ENCODE measurements at regions of chr9 and their contacts with region 1.

Region 1: DNA sequence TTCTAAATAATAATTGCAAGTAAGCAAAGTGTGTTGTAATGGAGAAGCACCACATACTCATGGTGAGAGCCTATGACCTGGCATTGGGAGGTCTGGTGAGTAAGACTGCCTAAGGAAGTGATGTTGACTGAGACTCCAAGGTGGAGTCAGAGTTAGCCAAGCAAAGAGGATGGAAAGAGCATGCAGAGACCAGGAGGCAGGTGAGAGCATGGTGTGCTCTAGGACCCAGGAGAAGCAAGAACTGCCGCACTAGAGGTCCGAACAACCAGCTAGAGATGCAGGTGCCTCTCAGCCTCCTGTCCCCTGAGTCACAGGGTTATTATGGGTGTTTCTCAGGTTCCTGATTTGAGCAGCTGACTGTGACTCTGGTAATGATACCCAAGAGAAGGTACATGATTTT is 27.3 kb downstream of the ANP32B start:
- DNase-seq: peak; percentile 78
- H3K4me3 ChIP-seq: no peak overlapping the region
- H3K27ac ChIP-seq: no peak overlapping the region
- H3K4me1 ChIP-seq: peaks cover 9% of the 10 kb centered on the region
- H3K27me3 ChIP-seq: no peaks in the 10 kb centered on the region
- CTCF ChIP-seq: no peak

Region 2: DNA sequence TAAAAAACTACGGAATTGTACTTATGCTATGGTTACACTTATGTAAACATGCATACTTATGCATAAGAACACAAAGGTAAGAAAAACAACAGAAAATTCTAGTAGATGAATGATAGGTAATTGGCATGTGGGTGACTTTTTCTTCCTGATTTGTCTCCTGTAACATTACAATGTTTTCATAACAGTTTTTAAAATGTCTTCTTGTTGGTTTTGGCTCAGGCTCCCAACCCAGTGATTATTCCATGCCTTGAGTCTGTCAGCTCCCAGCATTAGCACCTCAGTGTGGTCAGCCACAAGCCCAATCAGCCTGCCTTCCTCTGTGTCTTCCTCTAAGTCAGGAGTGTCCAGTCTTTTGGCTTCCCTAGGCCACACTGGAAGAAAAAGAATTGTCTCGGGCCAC is 165.3 kb before region 1 on chr9:
- CTCF ChIA-PET with region 1: no interaction called
- dilution Hi-C with region 1: no loop called
- in situ Hi-C with region 1: no loop called
- intact Hi-C with region 1: no loop called
- DNase-seq: peak; percentile 50
- H3K4me3 ChIP-seq: no peak overlapping the region
- H3K27ac ChIP-seq: no peak overlapping the region
- H3K4me1 ChIP-seq: peaks cover 12% of the 10 kb centered on the region
- H3K27me3 ChIP-seq: peaks cover 30% of the 10 kb centered on the region
- CTCF ChIP-seq: no peak

Region 3: GRCh38 chr9:97923529-97924108 is 86.8 kb before region 1 on chr9:
- CTCF ChIA-PET with region 1: no interaction called
- dilution Hi-C with region 1: no loop called
- in situ Hi-C with region 1: no loop called
- intact Hi-C with region 1: no loop called
- DNase-seq: peak; percentile 72
- H3K4me3 ChIP-seq: peak overlapping the region; percentile 17 to 67 (median 34)
- H3K27ac ChIP-seq: peak overlapping the region; percentile 11
- H3K4me1 ChIP-seq: peaks cover 9% of the 10 kb centered on the region
- H3K27me3 ChIP-seq: no peaks in the 10 kb centered on the region
- CTCF ChIP-seq: peak; percentile 30 to 69

Region 4: DNA sequence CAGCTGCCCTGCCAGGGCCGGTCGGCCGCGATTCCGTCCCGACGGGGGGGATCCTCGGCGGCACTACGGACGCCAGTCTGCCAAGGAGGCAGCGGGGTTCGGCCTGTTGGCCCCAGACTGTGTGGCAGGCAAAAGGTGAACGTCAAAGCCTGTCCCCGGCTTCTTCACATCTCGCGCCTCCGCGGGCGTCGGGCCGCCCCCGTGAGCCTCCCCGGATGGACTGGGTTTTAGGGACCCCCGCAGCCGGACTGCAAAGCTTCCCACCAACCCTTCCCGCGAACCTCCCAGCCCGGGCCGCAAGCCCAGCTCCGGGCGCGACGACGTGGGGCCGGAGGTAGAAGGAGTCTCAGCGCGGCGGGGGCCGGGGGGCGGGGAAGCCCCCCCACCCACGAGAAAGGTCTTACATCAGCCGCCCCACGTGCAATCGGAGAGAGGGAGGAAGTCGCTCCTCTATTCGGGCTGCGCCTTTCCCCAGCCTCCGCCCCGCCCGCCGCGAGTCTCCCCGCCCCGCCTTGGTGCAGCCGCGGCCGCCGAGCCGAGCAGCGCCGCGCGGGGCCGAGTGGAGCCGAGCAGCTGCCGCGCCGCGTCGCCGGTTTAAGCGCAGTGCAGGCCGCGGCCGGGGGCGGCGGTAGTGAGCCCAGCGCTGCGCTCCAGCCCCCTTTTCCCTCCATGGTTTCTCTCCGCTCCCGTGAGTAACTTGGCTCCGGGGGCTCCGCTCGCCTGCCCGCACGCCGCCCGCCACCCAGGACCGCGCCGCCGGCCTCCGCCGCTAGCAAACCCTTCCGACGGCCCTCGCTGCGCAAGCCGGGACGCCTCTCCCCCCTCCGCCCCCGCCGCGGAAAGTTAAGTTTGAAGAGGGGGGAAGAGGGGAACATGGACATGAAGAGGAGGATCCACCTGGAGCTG is 27.5 kb before region 1 on chr9 and contains the start of gene ANP32B:
- CTCF ChIA-PET with region 1: no interaction called
- dilution Hi-C with region 1: no loop called
- in situ Hi-C with region 1: no loop called
- intact Hi-C with region 1: loop called (anchors 2 kb)
- DNase-seq: peak; percentile 86
- H3K4me3 ChIP-seq: peak within 1 kb of the TSS; percentile 82 to 90 (median 88)
- H3K27ac ChIP-seq: peak within 1 kb of the TSS; percentile 94
- H3K4me1 ChIP-seq: peaks cover 43% of the 10 kb centered on the region
- H3K27me3 ChIP-seq: no peaks in the 10 kb centered on the region
- CTCF ChIP-seq: peak; percentile 65 to 70
- total RNA-seq, gene ANP32B: 8.2 to 164 TPM

Region 5: GRCh38 chr9:98056269-98057137 is 46.1 kb after region 1 on chr9 and contains the start of gene NANS:
- CTCF ChIA-PET with region 1: no interaction called
- dilution Hi-C with region 1: no loop called
- in situ Hi-C with region 1: no loop called
- intact Hi-C with region 1: loop called (anchors 2 kb)
- DNase-seq: peak; percentile 96
- H3K4me3 ChIP-seq: peak within 1 kb of the TSS; percentile 56 to 95 (median 57)
- H3K27ac ChIP-seq: peak within 1 kb of the TSS; percentile 62
- H3K4me1 ChIP-seq: peaks cover 10% of the 10 kb centered on the region
- H3K27me3 ChIP-seq: no peaks in the 10 kb centered on the region
- CTCF ChIP-seq: no peak
- total RNA-seq, gene NANS: 44.7 to 52.4 TPM

Region 6: DNA sequence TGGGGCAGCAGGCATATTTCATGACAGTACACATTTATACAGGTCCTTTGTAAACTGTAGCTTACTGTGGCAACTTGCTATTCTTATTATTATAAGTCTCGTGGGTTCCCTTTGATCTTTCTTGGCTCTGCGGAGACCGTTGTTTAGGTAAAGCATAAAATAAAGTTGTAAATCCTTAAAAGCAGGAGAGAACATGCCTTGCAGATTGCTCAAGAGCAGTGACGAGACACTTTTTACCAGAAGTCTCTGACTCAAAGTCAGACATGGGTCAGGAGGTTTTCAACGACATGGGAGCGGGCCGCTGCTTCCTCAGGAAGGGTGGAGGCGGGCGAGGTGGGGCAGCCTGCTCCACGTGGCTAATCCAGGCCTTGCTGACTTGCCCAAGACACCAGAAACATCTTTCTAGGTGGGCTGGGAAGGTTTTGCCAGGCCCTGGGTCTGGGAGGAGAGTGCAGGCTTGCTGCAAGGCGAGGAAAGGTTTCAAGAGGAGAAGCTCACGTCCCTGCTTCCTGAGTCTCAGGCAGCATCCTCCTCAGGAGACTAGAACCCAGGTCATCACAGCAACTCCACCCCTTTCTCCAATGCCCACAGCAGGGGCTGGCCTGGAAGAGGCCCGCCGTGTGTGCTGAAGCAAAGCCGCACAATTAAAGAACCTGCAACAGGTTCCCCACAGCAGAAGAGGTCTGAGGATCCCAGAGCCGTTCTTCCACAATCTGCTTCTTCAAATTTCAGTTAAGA is 238.5 kb after region 1 on chr9:
- CTCF ChIA-PET with region 1: no interaction called
- dilution Hi-C with region 1: no loop called
- in situ Hi-C with region 1: loop called in 1 of 2 experiments (anchors 25 kb)
- intact Hi-C with region 1: no loop called
- DNase-seq: peak; percentile 97
- H3K4me3 ChIP-seq: no peak overlapping the region
- H3K27ac ChIP-seq: peak overlapping the region; percentile 78
- H3K4me1 ChIP-seq: peaks cover 72% of the 10 kb centered on the region
- H3K27me3 ChIP-seq: no peaks in the 10 kb centered on the region
- CTCF ChIP-seq: no peak